ENCODE measurements at regions of chr10 and their contacts with region 1.

Region 1: GRCh38 chr10:133276435-133277201 is at the start of gene ADAM8:
- DNase-seq: peak; percentile 78
- ATAC-seq: peak; percentile 51
- H3K4me3 Mint-ChIP-seq: peak within 1 kb of the TSS; percentile 87
- H3K27ac Mint-ChIP-seq: peak within 1 kb of the TSS; percentile 87
- H3K4me1 Mint-ChIP-seq: peaks cover 23% of the 10 kb centered on the region
- H3K27me3 Mint-ChIP-seq: no peaks in the 10 kb centered on the region
- total RNA-seq, gene ADAM8: 90.8 to 91.0 TPM

Region 2: DNA sequence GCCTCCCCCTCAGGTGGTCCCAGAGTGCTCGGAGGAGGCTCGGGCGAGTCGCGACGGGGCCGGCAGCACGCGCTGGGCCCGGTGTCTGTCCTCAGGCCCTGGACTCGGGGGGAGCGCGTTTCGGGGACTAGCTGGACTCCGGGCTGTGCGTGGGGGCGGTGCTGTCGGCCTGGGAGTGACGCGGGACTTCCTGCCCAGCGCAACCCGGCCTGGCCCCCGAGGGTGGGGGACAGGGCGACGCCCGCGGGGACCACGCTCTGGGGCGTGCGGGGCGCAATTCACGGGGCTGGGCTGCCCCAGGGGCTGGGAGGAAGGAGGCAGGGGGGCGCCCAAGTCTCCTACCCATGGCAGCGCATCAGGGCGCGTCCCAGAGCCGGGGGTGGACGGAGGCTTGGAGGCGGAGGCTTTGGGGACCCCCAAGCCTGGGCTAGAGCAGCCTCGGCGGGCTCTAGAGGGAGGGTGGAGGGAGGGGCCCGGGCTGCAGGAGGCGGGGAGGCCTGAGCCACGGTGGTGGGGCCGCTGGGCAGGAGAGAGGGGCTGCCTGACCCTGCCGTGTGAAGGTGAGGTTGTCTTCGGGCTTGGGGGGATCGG is 41.3 kb before region 1 on chr10:
- POLR2A ChIA-PET with region 1: no interaction called
- DNase-seq: no peak
- ATAC-seq: peak; percentile 37
- H3K4me3 Mint-ChIP-seq: peak overlapping the region; percentile 28
- H3K27ac Mint-ChIP-seq: no peak overlapping the region
- H3K4me1 Mint-ChIP-seq: peaks cover 3% of the 10 kb centered on the region
- H3K27me3 Mint-ChIP-seq: peaks cover 64% of the 10 kb centered on the region

Region 3: GRCh38 chr10:133261726-133262325 is 14.8 kb before region 1 on chr10:
- POLR2A ChIA-PET with region 1: interaction called, 35 read pairs
- DNase-seq: peak; percentile 86
- ATAC-seq: peak; percentile 31
- H3K4me3 Mint-ChIP-seq: peak overlapping the region; percentile 67
- H3K27ac Mint-ChIP-seq: no peak overlapping the region
- H3K4me1 Mint-ChIP-seq: peaks cover 44% of the 10 kb centered on the region
- H3K27me3 Mint-ChIP-seq: no peaks in the 10 kb centered on the region

Region 4: GRCh38 chr10:133308421-133309110 is 31.9 kb after region 1 on chr10 and contains the starts of genes TUBGCP2 and ZNF511:
- POLR2A ChIA-PET with region 1: interaction called, 10 read pairs
- DNase-seq: peak; percentile 96
- ATAC-seq: peak; percentile 81
- H3K4me3 Mint-ChIP-seq: peak within 1 kb of the TSS; percentile 96
- H3K27ac Mint-ChIP-seq: peak within 1 kb of the TSS; percentile 99
- H3K4me1 Mint-ChIP-seq: peaks cover 9% of the 10 kb centered on the region
- H3K27me3 Mint-ChIP-seq: no peaks in the 10 kb centered on the region
- total RNA-seq, gene TUBGCP2: 56.4 to 69.3 TPM
- total RNA-seq, gene ZNF511: 44.5 to 47.4 TPM

Measured in activated naive CD8-positive, alpha-beta T cell treated with anti-CD3 and anti-CD28 coated beads, Interleukin-2, amount 10 ng/mL, durations not matched to agents 7 days and 5 days (primary cell).